ENCODE measurements at regions of chr13 and their contacts with region 1.

Region 1: DNA sequence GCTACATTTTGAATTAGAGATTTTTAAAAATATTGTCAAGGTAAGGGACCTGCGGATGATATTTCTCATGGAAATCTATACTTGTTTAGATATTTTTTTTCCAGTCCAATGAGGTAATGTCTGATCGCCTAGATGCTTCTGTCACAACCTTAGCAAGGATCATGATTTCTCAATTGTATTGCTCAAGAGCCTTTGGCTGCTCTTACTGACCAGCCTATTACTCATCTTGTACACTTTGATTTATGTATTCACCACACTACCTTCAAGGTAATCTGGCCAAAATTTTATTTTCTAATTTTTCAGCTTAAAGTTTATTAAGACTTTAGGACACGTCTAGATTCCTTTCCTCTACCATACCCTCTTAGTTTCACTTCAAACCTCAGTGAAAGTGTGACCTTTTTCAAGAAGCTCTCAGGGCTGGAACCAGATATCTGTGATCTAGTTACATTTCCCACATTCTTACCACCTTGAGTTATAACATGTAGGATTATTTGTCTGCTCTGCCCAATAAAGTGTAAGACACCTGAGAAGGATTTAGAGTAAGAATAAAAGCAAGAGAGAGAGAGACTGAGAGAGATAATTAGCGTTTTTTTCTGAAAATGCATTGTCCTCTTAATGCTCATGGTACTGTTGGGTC is 197.1 kb downstream of the ITGBL1 start:
- DNase-seq: peak; percentile 93
- H3K4me3 Mint-ChIP-seq: peak overlapping the region; percentile 40
- H3K27ac Mint-ChIP-seq: peak overlapping the region; percentile 76
- H3K4me1 Mint-ChIP-seq: peaks cover 21% of the 10 kb centered on the region
- H3K27me3 Mint-ChIP-seq: no peaks in the 10 kb centered on the region
- CTCF ChIP-seq: no peak

Region 2: GRCh38 chr13:101492251-101492910 is 157.2 kb before region 1 on chr13:
- CTCF ChIA-PET with region 1: no interaction called
- POLR2A ChIA-PET with region 1: no interaction called
- intact Hi-C with region 1: no loop called
- DNase-seq: no peak
- H3K4me3 Mint-ChIP-seq: no peak overlapping the region
- H3K27ac Mint-ChIP-seq: no peak overlapping the region
- H3K4me1 Mint-ChIP-seq: peaks cover 7% of the 10 kb centered on the region
- H3K27me3 Mint-ChIP-seq: no peaks in the 10 kb centered on the region
- CTCF ChIP-seq: no peak

Region 3: DNA sequence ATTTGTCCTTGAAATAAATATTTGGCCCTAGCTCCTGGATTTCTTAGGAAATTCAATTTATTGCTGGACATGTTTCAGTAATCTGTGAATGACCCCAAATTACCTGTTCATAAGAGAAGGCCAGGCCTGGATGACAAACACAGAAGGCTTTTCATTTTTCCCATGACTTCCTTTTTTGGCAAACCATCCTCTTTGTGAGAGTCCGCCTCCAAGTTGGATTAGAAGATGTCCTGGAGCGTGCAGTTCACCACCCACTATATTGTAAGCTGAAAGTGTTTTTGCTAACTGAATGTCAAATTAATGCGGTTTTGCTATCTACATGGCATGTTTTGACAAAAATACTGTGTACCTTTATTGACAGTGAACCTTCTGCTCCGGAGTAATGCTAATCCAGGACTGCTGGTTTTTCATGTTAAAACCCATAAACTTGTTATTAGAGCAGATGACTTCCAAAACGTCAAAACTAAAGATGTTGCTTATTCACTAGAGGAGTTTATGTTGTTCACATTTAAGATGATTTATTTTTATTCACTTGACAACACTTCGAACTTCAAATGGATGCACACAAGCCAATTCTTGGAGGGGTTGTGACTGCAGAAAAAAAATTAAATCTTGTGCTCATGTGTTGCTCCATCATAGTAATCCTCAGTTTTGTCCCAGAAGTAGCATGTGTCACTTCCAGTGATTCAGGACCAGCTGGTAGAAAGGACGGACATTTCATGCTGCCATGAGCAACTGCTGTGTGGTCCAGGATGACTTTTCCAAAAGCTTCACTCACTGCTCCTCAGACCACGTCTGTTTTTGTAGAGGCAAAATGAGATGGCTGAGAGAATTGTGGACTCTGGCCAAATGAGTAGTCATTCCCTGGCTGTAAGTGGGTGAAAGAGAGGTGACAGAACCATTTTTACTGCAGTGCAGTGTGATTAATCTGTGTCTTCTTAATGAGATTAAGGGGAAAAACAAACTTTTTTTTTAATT is 126.2 kb before region 1 on chr13:
- CTCF ChIA-PET with region 1: no interaction called
- POLR2A ChIA-PET with region 1: no interaction called
- intact Hi-C with region 1: no loop called
- DNase-seq: peak; percentile 51
- H3K4me3 Mint-ChIP-seq: no peak overlapping the region
- H3K27ac Mint-ChIP-seq: no peak overlapping the region
- H3K4me1 Mint-ChIP-seq: peaks cover 10% of the 10 kb centered on the region
- H3K27me3 Mint-ChIP-seq: no peaks in the 10 kb centered on the region
- CTCF ChIP-seq: no peak

Region 4: DNA sequence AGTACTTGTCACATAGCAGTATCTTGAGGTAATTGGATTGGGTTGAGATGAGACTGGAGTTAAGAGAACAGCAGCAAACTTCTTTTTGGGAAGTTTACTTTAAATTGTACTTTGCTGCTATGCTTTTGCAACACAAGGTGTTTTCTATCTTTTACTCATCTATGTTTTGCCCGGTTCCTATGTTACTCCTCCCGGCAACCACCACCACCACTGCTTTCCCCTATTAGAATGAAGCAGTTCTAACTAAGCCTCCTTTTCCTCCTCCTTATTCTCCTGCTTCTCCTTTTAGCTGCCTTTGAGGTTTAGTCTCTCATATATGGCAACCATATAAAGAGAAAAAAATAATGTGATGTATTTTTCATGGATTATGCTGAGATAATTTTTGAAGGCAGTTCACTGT is 36.4 kb after region 1 on chr13:
- CTCF ChIA-PET with region 1: no interaction called
- POLR2A ChIA-PET with region 1: no interaction called
- intact Hi-C with region 1: no loop called
- DNase-seq: no peak
- H3K4me3 Mint-ChIP-seq: no peak overlapping the region
- H3K27ac Mint-ChIP-seq: no peak overlapping the region
- H3K4me1 Mint-ChIP-seq: peaks cover 17% of the 10 kb centered on the region
- H3K27me3 Mint-ChIP-seq: no peaks in the 10 kb centered on the region
- CTCF ChIP-seq: no peak

Region 5: GRCh38 chr13:101700598-101700997 is 51.0 kb after region 1 on chr13:
- CTCF ChIA-PET with region 1: no interaction called
- POLR2A ChIA-PET with region 1: interaction called, 18 read pairs
- intact Hi-C with region 1: no loop called
- DNase-seq: peak; percentile 72
- H3K4me3 Mint-ChIP-seq: no peak overlapping the region
- H3K27ac Mint-ChIP-seq: peak overlapping the region; percentile 94
- H3K4me1 Mint-ChIP-seq: peaks cover 41% of the 10 kb centered on the region
- H3K27me3 Mint-ChIP-seq: no peaks in the 10 kb centered on the region
- CTCF ChIP-seq: no peak

Region 6: GRCh38 chr13:101706651-101707050 is 57.0 kb after region 1 on chr13:
- CTCF ChIA-PET with region 1: no interaction called
- POLR2A ChIA-PET with region 1: interaction called, 10 read pairs
- intact Hi-C with region 1: loop called (anchors 2 kb)
- DNase-seq: peak; percentile 99
- H3K4me3 Mint-ChIP-seq: no peak overlapping the region
- H3K27ac Mint-ChIP-seq: peak overlapping the region; percentile 80
- H3K4me1 Mint-ChIP-seq: peaks cover 32% of the 10 kb centered on the region
- H3K27me3 Mint-ChIP-seq: no peaks in the 10 kb centered on the region
- CTCF ChIP-seq: no peak

Region 7: DNA sequence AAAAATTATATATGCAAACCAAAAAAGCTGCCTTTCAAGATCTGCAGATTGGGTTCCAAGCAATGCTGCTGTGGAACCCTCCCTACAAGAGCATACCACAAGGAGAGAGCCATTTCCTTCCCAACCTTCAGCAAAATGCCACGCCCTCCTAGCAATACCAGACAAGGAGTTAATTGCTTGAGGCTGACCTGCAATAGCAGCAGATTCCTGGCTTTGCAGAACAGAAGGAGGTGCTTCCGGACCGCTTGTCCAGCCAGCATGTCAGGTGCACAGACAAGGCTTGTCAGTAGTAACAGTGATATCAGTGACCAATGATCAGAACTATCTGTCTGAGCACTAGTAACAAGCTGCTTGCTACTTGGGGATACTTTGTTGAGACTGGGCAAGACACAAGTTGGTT is 450.6 kb after region 1 on chr13:
- CTCF ChIA-PET with region 1: no interaction called
- POLR2A ChIA-PET with region 1: no interaction called
- intact Hi-C with region 1: no loop called
- DNase-seq: no peak
- H3K4me3 Mint-ChIP-seq: no peak overlapping the region
- H3K27ac Mint-ChIP-seq: no peak overlapping the region
- H3K4me1 Mint-ChIP-seq: no peaks in the 10 kb centered on the region
- H3K27me3 Mint-ChIP-seq: no peaks in the 10 kb centered on the region
- CTCF ChIP-seq: no peak

Measured in MCF 10A (cell line).